BJ (cell line): ENCODE measurements at regions of chr1 and their contacts with region 1.

Region 1: DNA sequence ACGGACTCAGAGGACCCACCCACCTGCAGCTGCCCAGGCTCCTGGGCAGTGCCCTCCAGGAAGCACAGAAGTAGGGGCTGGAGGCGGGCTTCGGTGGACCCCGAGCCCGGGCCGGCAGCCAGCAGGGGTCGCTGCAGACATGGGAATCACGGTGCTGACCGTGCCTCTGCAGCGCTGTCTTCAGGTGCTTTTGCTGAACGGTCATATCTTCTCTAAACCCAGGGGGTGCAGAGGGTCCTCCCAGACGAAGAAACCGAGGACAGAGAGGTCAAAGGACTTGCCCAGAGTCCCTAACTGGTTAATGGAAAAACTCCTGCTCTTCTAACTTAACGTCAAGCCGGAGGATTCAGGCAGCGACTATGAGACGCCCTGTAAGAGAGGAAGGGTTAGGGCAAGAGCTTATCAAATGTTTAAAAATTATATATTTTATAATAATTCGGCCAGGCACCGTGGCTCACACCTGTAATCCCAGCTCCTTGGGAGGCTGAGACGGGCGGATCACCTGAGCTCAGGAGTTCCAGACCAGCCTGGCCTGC is 21.5 kb upstream of the LEFTY2 start:
- DNase-seq: no peak
- H3K4me3 ChIP-seq: no peak overlapping the region
- H3K27me3 ChIP-seq: 0 out of 2 replicates have a peak, but pooled peaks cover 3% of the 10 kb centered on the region
- CTCF ChIP-seq: peak; percentile 64

Region 2: DNA sequence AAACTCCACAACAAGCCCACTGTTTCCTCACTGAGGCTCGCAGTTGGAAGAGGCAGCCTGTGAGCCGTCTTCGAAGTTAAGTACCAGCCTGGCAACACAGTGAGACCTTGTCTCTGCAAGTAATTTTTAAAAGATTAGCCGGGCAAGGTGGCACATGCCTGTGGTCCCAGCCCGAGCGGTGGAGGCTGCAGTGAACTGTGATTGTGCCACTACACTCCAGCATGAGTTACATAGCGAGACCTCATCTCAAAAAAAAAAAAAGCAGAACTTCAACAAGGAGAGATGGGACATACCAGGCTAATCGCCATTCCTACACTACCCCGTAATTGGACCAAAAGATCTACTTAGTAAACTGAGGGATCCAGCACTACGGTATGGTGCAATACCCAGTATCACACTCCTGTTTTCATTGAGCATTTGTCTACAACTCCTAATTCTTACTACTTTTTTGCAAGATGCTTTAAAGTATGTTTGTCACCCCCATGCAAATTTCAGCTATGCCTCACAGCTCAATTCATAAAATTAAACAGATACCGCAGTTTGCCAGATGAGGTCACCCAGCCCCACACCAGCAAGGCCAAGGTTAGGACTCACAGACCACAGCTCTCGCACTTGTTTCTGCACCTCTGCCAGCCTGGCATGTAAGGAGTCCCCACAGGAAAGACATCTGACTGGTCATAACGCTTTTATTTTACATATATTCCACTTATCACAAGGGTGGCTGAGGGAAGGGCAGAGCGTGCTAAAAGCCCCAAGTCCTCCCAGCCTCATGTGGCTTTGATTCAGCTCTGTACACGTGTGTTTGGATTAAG is 15.6 kb after region 1 on chr1:
- CTCF ChIA-PET with region 1: interaction called, 10 read pairs
- POLR2A ChIA-PET with region 1: no interaction called
- DNase-seq: no peak
- H3K4me3 ChIP-seq: no peak overlapping the region
- H3K27me3 ChIP-seq: no peaks in the 10 kb centered on the region
- CTCF ChIP-seq: no peak